Endothelial cell of umbilical vein (primary cell): ENCODE measurements at regions of chr7 and their contacts with region 1.

Region 1: DNA sequence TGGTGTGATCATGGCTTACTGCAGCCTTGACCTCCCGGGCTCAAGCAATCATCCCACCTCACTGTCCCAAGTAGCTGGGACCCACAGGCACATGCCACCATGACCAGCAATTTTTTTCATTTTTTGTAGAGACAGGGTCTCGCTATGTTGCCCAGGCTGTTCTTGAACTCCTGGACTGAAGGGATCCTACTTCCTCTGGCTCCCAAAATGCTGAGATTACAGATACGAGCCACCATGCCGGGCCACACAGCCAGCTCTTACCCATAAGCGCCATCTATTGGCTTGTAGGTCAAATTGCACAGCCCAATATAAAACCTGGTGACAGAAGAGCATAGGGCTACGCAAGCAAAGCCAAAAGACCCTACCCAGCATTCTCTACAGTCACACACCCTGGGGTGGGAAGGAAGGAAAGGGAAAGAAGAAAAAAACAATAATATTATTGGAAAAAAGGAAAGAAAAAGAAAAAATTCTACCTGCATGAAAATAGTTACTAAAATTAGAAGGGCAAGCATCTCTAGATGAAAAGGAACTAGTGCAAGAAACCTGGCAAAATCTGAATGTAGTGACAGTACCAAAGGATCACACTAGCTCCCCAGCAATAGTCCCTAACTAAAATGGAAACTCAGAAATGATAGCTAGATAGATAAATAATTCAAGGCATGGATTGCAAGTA is 29.4 kb upstream of the AMPH start:
- DNase-seq: peak; percentile 45
- H3K4me3 ChIP-seq: no peak overlapping the region
- H3K27ac ChIP-seq: no peak overlapping the region
- H3K4me1 ChIP-seq: no peaks in the 10 kb centered on the region
- H3K27me3 ChIP-seq: no peaks in the 10 kb centered on the region
- CTCF ChIP-seq: peak; percentile 61 to 76
- POLR2A ChIP-seq: no peak

Region 2: DNA sequence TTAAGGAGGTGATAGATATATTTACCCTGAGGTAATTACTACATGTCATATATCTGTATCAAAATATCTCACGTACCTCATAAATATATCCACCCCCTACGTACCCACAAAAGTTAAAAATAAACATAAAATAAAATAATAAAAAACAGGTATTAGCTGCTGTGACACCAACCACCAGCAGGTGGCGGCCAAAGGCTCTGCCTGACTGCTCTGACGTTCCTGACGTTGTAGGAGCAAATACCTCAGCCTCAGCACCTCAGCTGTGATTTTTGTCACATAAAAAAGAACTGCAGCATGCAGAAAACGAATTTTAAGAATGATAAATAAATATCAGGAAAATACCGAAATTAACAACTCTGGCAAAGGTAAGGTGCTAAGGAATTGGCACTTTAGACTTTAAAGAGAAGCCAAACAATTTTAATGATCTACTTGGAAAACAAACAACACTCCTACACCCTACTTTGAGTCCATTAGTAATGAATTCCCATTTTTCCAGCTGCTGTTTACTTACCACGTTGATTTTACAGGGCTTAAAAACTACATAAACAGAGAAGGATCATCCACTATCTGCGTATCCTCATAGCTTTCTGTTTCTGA is 261.7 kb before region 1 on chr7:
- CTCF ChIA-PET with region 1: interaction called, 54 read pairs
- POLR2A ChIA-PET with region 1: no interaction called
- dilution Hi-C with region 1: no loop called
- intact Hi-C with region 1: loop called (anchors 1 kb)
- DNase-seq: peak; percentile 60
- H3K4me3 ChIP-seq: no peak overlapping the region
- H3K27ac ChIP-seq: no peak overlapping the region
- H3K4me1 ChIP-seq: no peaks in the 10 kb centered on the region
- H3K27me3 ChIP-seq: no peaks in the 10 kb centered on the region
- CTCF ChIP-seq: peak; percentile 83 to 89
- POLR2A ChIP-seq: no peak

Region 3: DNA sequence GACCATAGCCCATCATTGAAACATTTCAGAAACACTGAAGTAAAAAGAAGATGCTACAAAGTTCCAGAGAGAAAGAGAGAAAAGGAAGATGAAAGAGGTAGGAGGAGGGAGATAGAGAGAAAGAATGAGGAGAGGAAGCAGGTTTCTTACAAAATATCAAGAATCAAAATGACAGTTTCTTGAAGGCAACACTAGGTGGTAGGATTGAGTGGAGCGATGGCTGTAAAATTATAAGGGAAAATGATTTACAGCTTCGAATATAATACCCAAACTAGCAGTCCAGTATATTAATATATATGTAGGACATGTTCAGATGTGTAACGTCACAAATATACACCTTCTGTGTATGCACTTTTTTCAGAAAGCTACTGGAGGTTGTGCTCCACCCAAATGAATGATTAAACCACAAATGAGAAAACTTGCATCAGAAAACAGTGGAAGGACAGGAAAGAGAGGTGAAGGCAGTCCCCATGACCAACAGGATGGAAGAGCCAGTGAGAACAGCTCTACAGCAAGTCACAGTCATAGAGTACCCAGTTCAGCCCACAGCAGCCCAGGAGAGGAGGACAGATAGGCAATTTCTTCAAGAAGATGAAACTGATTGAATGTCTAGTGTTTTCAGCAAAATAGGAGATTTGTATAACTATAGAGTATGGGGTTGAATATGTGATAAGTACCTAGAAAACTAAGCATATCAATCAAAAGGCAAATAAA is 235.7 kb before region 1 on chr7:
- CTCF ChIA-PET with region 1: interaction called, 6 read pairs
- POLR2A ChIA-PET with region 1: no interaction called
- dilution Hi-C with region 1: no loop called
- intact Hi-C with region 1: loop called (anchors 1 kb)
- DNase-seq: peak; percentile 12
- H3K4me3 ChIP-seq: no peak overlapping the region
- H3K27ac ChIP-seq: no peak overlapping the region
- H3K4me1 ChIP-seq: peaks cover 7% of the 10 kb centered on the region
- H3K27me3 ChIP-seq: no peaks in the 10 kb centered on the region
- CTCF ChIP-seq: peak in 1 of 2 donors; percentile 6
- POLR2A ChIP-seq: no peak

Region 4: GRCh38 chr7:38451840-38452239 is 208.7 kb before region 1 on chr7:
- CTCF ChIA-PET with region 1: interaction called, 9 read pairs
- POLR2A ChIA-PET with region 1: no interaction called
- dilution Hi-C with region 1: no loop called
- intact Hi-C with region 1: loop called (anchors 1 kb)
- DNase-seq: peak; percentile 54
- H3K4me3 ChIP-seq: no peak overlapping the region
- H3K27ac ChIP-seq: no peak overlapping the region
- H3K4me1 ChIP-seq: no peaks in the 10 kb centered on the region
- H3K27me3 ChIP-seq: no peaks in the 10 kb centered on the region
- CTCF ChIP-seq: peak; percentile 6 to 12
- POLR2A ChIP-seq: no peak

Region 5: GRCh38 chr7:38630720-38631673 is 29.6 kb before region 1 on chr7 and contains the start of gene AMPH:
- CTCF ChIA-PET with region 1: interaction called, 11 read pairs
- POLR2A ChIA-PET with region 1: no interaction called
- dilution Hi-C with region 1: no loop called
- intact Hi-C with region 1: no loop called
- DNase-seq: peak; percentile 45
- H3K4me3 ChIP-seq: peak within 1 kb of the TSS; percentile 67 to 84 (median 76)
- H3K27ac ChIP-seq: no peak within 1 kb of the TSS
- H3K4me1 ChIP-seq: peaks cover 12% of the 10 kb centered on the region
- H3K27me3 ChIP-seq: peaks cover 4 to 5% of the 10 kb centered on the region in 2 experiments
- CTCF ChIP-seq: no peak
- POLR2A ChIP-seq: no peak
- total RNA-seq, gene AMPH: 8.0 and 9.2 TPM in 2 replicates

Region 6: GRCh38 chr7:38673795-38674194 is 13.2 kb after region 1 on chr7:
- CTCF ChIA-PET with region 1: interaction called, 26 read pairs
- POLR2A ChIA-PET with region 1: no interaction called
- dilution Hi-C with region 1: no loop called
- intact Hi-C with region 1: no loop called
- DNase-seq: peak; percentile 52
- H3K4me3 ChIP-seq: no peak overlapping the region
- H3K27ac ChIP-seq: no peak overlapping the region
- H3K4me1 ChIP-seq: peaks cover 4% of the 10 kb centered on the region
- H3K27me3 ChIP-seq: no peaks in the 10 kb centered on the region
- CTCF ChIP-seq: no peak
- POLR2A ChIP-seq: no peak

Region 7: DNA sequence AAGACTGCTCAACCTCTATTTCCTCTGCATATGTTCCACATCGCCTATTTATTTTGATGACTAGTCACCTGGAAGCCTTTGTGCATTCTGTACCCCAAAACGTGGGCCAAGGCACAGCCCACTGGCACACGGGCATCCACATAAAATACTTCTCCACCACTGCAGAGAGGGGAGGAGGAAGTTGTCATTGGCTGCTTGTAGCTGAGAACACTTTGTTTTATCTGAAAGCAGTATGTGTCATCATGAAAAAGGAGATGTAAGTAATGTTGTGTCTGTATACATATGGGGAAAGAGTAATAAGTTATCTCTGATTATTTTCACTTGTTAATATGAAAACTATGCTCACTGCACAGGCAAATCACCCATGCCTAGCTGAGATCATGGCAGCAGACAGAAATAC is 18.9 kb after region 1 on chr7:
- CTCF ChIA-PET with region 1: interaction called, 12 read pairs
- POLR2A ChIA-PET with region 1: no interaction called
- dilution Hi-C with region 1: no loop called
- intact Hi-C with region 1: no loop called
- DNase-seq: no peak
- H3K4me3 ChIP-seq: no peak overlapping the region
- H3K27ac ChIP-seq: no peak overlapping the region
- H3K4me1 ChIP-seq: peaks cover 2% of the 10 kb centered on the region
- H3K27me3 ChIP-seq: no peaks in the 10 kb centered on the region
- CTCF ChIP-seq: no peak
- POLR2A ChIP-seq: no peak

Region 8: DNA sequence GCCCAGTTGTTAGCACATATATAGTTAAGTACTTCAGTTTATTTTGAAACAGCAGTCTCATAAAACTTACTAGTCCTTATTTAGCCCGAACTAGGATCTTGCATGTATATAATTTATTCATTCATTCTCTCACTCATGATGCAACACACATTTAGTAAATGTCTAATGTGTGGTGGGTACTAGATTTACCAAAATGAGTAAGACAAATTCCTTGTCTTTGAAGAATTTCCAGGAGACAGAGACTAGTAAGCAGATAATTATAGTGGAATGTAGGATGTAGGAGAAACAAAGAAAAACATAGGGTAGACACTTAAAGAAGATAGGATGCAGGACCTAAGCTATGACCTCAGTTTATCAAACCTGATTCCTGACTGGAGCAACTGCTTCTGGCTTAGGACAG is 90.9 kb after region 1 on chr7:
- CTCF ChIA-PET with region 1: no interaction called
- POLR2A ChIA-PET with region 1: no interaction called
- dilution Hi-C with region 1: no loop called
- intact Hi-C with region 1: no loop called
- DNase-seq: no peak
- H3K4me3 ChIP-seq: no peak overlapping the region
- H3K27ac ChIP-seq: no peak overlapping the region
- H3K4me1 ChIP-seq: no peaks in the 10 kb centered on the region
- H3K27me3 ChIP-seq: no peaks in the 10 kb centered on the region
- CTCF ChIP-seq: no peak
- POLR2A ChIP-seq: no peak